ENCODE measurements at regions of chr21 and their contacts with region 1.

Region 1: GRCh38 chr21:41283211-41283818 is 33.3 kb upstream of the FAM3B start:
- DNase-seq: peak; percentile 45
- H3K4me3 Mint-ChIP-seq: no peak overlapping the region
- H3K27ac Mint-ChIP-seq: no peak overlapping the region
- H3K4me1 Mint-ChIP-seq: no peaks in the 10 kb centered on the region
- H3K27me3 Mint-ChIP-seq: peaks cover 24% of the 10 kb centered on the region

Region 2: DNA sequence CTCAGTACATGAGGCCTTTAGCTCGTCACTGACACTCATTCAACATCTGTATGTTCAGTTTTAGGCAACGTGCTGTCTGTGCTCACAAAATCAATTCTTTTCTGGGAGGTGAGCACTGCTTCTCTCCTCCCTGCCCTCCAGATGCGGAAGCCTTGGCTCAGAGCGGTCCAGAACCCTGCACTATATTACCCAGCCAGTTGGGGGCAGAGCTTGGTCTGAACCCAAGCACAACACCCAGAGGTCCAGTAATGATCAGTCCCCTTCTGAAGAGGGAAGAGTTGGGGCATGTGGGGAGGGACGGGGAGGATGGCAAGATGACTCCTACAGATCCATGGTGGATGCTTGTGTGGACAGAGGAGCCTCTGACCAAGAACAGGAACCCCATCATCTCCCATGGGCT is 430.8 kb before region 1 on chr21:
- CTCF ChIA-PET with region 1: no interaction called
- POLR2A ChIA-PET with region 1: no interaction called
- intact Hi-C with region 1: no loop called
- DNase-seq: no peak
- H3K4me3 Mint-ChIP-seq: no peak overlapping the region
- H3K27ac Mint-ChIP-seq: no peak overlapping the region
- H3K4me1 Mint-ChIP-seq: no peaks in the 10 kb centered on the region
- H3K27me3 Mint-ChIP-seq: peaks cover 8% of the 10 kb centered on the region

Region 3: DNA sequence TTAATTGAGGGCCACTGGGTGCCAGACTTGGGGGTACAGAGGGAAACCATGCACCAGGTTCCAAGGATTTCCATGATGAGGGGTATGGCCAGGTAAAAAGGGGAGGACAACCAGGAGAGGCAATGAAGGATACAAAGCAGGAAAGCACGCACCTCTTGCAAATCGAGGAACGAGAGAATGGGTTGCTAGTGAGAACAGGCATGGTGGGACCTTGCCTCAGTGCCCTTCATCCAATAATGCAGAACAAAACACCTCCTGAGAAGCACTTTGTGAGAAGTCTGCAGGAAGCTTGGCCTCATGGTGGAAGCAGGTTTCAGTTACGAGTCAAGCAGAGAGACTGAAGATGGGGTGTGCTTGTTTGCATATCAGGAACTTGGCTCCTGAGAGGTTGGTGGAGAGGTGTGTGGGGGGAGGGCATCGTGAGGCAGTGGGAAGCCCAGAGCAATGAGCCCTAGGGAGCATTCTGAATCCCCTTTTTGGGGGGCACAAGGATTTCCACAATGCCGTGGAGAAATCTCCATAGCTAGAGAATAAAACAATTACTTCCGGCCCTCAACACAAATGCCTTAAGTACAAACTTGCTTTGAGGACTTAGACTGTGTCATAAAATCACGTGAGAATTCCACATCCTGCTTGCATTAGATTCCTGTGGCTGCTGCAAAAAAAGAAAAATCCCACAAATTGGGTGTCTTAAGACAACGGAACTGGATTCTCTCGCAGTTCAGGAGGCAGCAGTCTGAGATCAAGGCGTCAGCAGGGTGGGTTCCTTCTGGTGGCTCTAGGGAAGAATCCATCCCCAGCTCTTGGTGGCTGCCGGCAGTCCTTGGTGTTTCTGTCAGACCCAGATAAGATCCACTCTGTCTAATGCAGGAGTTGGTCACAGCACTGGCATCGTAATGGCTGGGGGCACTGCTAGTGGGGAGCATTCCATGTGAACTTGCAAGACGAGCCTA is 170.3 kb before region 1 on chr21:
- CTCF ChIA-PET with region 1: no interaction called
- POLR2A ChIA-PET with region 1: no interaction called
- intact Hi-C with region 1: no loop called
- DNase-seq: no peak
- H3K4me3 Mint-ChIP-seq: peak overlapping the region; percentile 29
- H3K27ac Mint-ChIP-seq: no peak overlapping the region
- H3K4me1 Mint-ChIP-seq: peaks cover 21% of the 10 kb centered on the region
- H3K27me3 Mint-ChIP-seq: peaks cover 3% of the 10 kb centered on the region

Region 4: GRCh38 chr21:41294539-41295231 is 11.4 kb after region 1 on chr21:
- CTCF ChIA-PET with region 1: interaction called, 20 read pairs
- POLR2A ChIA-PET with region 1: no interaction called
- intact Hi-C with region 1: no loop called
- DNase-seq: no peak
- H3K4me3 Mint-ChIP-seq: no peak overlapping the region
- H3K27ac Mint-ChIP-seq: no peak overlapping the region
- H3K4me1 Mint-ChIP-seq: peaks cover 4% of the 10 kb centered on the region
- H3K27me3 Mint-ChIP-seq: peaks cover 33% of the 10 kb centered on the region

Region 5: DNA sequence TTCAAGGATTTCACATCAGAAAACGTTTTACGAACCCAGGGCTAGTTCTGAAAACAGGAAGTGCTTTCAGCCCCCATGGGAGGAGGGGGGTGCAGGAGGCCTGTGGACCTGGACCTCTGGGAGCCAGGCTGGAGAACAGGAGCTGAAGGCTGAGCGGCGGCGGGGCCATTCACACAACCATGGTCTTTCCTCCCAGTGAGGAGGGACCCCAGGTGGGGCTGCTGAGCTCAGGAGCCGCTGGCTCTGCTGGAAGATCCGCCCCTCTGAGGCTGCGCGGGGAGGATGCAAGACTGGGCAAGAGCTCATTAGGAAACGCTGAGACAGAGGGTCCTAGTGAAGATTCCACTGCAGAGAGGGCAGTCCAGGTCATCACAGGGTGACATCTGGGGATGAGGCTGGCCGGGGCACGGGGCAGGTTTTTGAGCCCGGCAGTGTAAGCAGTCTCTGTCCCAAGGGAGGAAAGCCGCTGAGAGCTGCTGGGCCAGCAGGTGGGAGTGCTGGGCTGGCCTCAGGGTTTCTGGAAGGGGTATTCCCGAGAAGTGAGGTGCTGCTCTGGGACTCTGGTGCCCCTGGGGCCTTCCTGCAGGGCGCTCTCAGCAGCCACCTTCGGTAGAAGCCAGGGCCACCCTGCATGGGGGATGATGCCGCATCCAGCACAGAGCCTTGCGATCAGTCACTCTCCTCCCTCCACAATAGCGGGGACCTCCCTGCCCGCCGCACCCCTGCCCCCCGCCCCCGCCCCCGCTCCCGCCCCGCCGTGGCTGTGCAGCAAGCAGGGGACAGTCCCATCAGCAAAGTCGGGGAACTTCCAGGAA is 86.0 kb after region 1 on chr21:
- CTCF ChIA-PET with region 1: interaction called, 12 read pairs
- POLR2A ChIA-PET with region 1: no interaction called
- intact Hi-C with region 1: loop called (anchors 10 kb)
- DNase-seq: peak; percentile 58
- H3K4me3 Mint-ChIP-seq: peak overlapping the region; percentile 78
- H3K27ac Mint-ChIP-seq: peak overlapping the region; percentile 87
- H3K4me1 Mint-ChIP-seq: peaks cover 55% of the 10 kb centered on the region
- H3K27me3 Mint-ChIP-seq: no peaks in the 10 kb centered on the region

Region 6: GRCh38 chr21:41466024-41466835 is 182.9 kb after region 1 on chr21:
- CTCF ChIA-PET with region 1: interaction called, 17 read pairs
- POLR2A ChIA-PET with region 1: no interaction called
- intact Hi-C with region 1: no loop called
- DNase-seq: no peak
- H3K4me3 Mint-ChIP-seq: no peak overlapping the region
- H3K27ac Mint-ChIP-seq: no peak overlapping the region
- H3K4me1 Mint-ChIP-seq: no peaks in the 10 kb centered on the region
- H3K27me3 Mint-ChIP-seq: peaks cover 19% of the 10 kb centered on the region

Region 7: GRCh38 chr21:41768437-41769061 is 485.2 kb after region 1 on chr21:
- CTCF ChIA-PET with region 1: no interaction called
- POLR2A ChIA-PET with region 1: no interaction called
- intact Hi-C with region 1: loop called (anchors 5 kb)
- DNase-seq: peak; percentile 31
- H3K4me3 Mint-ChIP-seq: peak overlapping the region; percentile 72
- H3K27ac Mint-ChIP-seq: no peak overlapping the region
- H3K4me1 Mint-ChIP-seq: peaks cover 21% of the 10 kb centered on the region
- H3K27me3 Mint-ChIP-seq: peaks cover 51% of the 10 kb centered on the region

Region 8: DNA sequence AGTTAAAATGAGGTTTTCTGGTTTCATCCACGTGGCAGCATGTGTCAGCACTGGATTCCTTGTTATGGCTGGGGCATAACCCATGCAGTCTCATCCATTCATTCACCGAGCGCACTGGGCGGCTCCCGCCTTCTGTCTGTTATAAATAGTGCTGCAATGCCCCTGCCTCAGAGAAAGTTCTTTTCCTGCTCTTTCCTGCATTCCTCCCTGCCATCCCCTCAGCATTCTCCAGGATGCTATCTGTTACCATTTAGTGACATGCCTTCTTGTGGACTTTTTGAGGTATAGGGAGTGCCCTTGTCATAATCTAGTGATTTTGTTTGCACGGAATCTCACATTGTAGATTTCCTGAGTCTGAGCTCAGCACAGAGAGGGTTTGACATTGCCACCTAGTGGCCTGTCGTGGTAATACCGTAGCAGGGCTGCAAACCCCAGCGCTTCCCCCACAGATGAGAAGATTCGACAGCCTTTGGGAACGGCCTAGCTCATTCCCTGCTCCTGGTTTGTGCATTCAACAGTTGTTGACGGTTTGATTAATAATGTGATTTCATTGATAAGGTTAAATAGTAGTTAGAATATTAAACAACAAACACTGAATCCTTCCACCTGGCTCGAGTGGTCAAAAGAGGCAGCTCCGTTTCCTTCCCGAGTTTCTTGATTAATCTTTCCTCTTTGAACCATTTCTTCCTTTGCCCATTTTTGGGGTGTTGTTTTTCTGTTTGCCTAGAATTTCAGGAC is 834.1 kb after region 1 on chr21:
- CTCF ChIA-PET with region 1: interaction called, 16 read pairs
- POLR2A ChIA-PET with region 1: no interaction called
- intact Hi-C with region 1: no loop called
- DNase-seq: peak; percentile 82
- H3K4me3 Mint-ChIP-seq: no peak overlapping the region
- H3K27ac Mint-ChIP-seq: no peak overlapping the region
- H3K4me1 Mint-ChIP-seq: peaks cover 11% of the 10 kb centered on the region
- H3K27me3 Mint-ChIP-seq: peaks cover 51% of the 10 kb centered on the region

Measured in activated CD4-positive, alpha-beta memory T cell treated with anti-CD3 and anti-CD28 coated beads for 36 hours (primary cell).